ENCODE measurements at regions of chr11 and their contacts with region 1.

Region 1: DNA sequence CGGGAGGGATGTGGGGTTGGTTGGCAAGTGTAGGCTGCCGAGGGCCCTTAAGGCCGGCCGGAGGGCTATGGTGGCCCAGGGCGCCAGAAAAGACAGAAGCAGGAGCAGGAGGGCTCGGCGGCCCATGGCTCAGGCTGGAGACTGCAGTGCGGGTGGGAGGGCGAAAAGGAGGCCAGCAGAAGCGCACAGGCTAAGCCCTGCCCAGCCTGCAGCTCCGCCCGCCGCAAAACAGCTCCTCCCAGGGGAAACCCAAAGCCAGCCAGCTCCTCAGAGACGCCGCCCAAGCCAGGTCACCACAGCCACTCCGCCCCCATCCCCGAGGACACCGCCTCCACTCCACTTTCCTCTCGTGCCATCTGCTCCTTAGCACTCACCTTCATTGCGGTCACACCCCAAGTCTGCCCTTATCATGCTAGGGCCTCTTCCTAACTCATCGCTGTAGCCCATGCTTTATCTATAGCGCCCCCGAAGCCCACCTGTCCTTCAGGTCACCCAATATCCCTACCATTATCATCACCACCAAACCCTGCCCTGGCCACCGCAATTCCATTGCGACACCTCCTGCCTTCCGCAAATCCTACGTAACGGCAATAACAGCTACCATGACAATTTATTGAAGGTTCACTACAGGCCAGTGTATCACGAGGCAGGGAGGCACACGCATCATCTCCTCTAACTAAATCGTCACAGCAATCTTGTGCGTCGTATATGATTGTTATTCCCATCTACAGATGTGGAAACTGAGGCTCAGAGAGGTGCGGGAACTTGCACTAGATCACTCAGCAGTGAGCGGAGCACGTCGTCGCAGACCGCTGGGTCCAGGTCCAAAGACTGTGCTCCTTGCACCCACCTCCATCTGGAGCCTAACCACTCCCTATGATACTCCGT is at the start of gene PRCP:
- DNase-seq: peak; percentile 68 to 98 (median 90)

Region 2: DNA sequence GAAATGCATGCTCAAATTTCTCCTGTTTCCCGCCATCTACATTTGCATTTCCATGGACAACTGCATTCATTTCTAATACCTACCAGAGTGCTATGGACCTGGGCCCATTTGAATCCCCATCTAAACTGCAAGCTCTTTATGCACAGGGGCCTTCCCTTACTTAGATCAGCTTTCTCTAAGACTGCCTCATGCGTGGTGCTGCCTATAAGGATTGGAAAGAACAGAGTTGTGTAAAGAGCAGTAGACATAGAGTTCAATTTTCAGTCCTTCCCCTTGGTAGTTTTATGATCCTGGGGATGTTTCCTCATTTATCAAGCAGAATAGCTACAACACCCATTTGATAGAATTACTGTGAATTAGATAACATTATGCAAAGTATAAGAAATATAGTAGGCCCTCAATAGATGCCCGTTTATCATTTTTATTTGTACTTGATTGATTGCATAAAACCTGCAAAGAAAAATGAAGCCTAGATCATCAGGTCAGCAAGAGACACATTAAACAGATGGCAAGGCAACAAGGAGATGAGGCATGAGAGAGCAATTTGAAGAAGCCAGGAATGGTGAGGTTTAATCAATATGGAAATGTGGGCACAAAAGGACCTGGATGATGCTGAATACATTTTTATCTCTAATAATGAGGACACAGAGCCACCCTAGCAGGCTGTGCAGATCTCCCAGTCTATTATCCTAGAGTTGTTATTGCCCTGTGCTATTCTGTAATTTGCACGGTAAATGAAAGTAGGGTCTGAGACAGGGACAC is 526.6 kb before region 1 on chr11:
- intact Hi-C with region 1: no loop called
- DNase-seq: no peak

Region 3: DNA sequence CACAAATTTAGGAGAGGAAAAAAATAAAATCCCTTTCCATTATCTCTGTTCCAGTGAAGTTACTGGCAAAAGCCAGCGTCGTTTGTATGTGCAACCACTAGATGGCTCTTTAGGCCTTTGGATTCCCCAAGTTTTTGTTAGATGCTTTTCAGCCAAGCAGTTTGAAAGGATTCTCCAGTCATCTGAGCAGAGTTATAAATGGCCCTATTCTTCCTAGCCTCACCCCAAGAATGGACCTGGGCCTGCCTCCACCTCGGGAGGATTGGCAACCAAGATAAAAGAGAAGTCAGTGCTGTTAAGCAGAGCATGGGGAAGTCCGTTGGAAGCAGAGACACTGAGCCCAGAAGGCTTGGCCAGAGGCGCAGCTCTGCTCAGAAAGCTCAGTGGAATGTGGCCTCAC is 182.2 kb before region 1 on chr11:
- intact Hi-C with region 1: loop called (anchors 2 kb)
- DNase-seq: peak in 9 of 10 donors; percentile 37 to 90 (median 47)

Region 4: GRCh38 chr11:82796998-82797964 is 103.2 kb before region 1 on chr11:
- intact Hi-C with region 1: no loop called
- DNase-seq: peak in 8 of 10 donors; percentile 29 to 89 (median 48)

Region 5: GRCh38 chr11:83097429-83098075 is 197.0 kb after region 1 on chr11:
- intact Hi-C with region 1: no loop called
- DNase-seq: no peak

Region 6: GRCh38 chr11:83156150-83156995 is 255.9 kb after region 1 on chr11:
- intact Hi-C with region 1: loop called (anchors 2 kb)
- DNase-seq: peak; percentile 96 to 100 (median 98)

Region 7: GRCh38 chr11:83193315-83194280 is 293.1 kb after region 1 on chr11 and contains the start of gene ANKRD42:
- intact Hi-C with region 1: loop called (anchors 5 kb)
- DNase-seq: peak; percentile 85 to 99 (median 93)

Region 8: DNA sequence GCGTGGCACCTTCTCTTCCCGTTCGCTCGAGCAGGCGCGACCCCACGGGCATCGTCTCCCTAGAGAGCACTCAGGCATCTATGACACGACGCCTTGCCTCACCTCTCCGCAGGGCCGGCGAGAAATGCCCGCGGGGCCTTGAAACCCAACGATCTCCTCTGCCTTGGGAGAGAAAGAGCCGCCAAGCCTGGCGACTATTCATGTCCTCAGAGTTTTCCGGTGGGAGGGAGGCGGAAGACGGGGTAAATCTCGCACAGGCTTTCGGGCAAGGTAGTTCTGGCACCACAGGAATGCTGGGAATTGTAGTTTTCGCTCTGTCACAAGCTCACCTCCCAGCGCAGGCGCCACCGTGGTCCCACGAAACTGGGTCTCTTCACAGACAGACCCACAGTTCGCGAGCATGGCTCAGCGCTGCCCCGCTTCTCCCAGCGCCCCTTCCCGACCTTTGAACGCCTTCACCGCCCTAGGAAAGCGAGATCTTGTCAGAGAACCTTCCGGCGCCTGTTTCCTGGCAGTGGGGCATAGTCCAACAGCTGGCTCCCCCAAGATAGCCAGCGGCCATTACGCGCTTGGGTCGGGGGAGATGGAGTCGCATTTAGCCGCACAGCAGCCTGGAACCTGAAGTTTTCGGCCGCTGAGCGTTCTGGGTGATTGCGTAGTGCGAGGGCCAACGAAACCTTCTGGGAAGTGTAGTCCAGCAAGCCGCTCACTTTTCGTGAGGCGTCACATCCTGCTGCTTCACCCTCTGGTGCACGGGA is 385.4 kb after region 1 on chr11 and contains the start of gene CCDC90B:
- intact Hi-C with region 1: loop called (anchors 10 kb)
- DNase-seq: peak; percentile 95 to 99 (median 98)